B cell (primary cell): ENCODE measurements at regions of chr1 and their contacts with region 1.

Region 1: DNA sequence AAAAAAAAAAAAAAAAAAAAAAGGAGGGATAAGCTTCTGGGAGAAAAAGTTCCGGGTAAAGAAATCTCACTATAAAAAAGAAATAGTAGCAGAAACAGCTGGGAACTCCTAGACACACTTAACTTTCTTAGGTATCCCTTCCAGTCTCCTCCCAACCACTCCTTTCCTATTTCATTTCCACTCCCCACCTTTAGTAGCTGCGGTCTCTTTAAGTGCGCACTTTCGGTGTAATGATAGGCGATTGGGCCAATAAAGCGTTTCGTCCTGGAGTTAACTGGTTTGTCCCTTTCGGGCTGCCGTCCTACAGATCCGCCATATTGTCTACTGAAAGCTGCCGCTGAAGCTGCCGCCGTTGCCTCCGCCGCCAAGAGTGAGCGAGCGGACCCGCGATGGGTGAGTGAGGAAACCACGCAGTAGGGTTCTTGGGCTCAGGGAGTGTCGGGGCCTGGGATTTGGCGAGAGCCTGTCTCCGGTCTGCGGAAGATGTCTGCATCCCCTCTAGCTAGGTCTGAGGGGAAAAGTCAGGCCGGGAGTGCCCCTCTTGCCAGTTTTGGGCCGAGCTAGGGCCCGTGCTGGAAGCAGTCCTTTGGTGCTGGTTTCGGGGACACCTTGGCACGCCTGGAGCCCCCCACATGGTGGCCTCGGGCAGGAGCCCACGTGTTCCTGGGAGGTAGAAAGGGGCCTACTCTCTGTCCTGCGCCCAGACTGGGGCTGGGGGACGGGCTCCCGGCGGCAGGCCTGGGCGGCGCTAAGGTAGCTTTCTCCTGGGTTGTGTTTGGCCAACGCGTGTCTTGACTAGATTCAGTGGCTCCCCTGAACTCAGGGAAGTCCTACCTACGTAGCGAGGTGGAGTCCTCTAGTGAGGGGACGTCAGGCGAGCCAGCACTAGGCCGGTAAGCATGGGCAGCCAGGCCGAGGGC is at the start of gene KPNA6:
- DNase-seq: peak; percentile 96
- ATAC-seq: peak; percentile 83
- H3K4me3 ChIP-seq: peak within 1 kb of the TSS; percentile 86 to 99 (median 93)
- H3K4me3 Mint-ChIP-seq: peak within 1 kb of the TSS; percentile 100
- H3K27ac ChIP-seq: peak within 1 kb of the TSS; percentile 86 to 88
- H3K27ac Mint-ChIP-seq: peak within 1 kb of the TSS; percentile 100
- H3K4me1 ChIP-seq: peaks cover 33 to 44% of the 10 kb centered on the region in 2 donors
- H3K4me1 Mint-ChIP-seq: peaks cover 44% of the 10 kb centered on the region
- H3K27me3 ChIP-seq: no peaks in the 10 kb centered on the region
- H3K27me3 Mint-ChIP-seq: no peaks in the 10 kb centered on the region
- CTCF ChIP-seq: no peak
- total RNA-seq, gene KPNA6: 49.9 and 54.8 TPM in 2 replicates

Region 2: DNA sequence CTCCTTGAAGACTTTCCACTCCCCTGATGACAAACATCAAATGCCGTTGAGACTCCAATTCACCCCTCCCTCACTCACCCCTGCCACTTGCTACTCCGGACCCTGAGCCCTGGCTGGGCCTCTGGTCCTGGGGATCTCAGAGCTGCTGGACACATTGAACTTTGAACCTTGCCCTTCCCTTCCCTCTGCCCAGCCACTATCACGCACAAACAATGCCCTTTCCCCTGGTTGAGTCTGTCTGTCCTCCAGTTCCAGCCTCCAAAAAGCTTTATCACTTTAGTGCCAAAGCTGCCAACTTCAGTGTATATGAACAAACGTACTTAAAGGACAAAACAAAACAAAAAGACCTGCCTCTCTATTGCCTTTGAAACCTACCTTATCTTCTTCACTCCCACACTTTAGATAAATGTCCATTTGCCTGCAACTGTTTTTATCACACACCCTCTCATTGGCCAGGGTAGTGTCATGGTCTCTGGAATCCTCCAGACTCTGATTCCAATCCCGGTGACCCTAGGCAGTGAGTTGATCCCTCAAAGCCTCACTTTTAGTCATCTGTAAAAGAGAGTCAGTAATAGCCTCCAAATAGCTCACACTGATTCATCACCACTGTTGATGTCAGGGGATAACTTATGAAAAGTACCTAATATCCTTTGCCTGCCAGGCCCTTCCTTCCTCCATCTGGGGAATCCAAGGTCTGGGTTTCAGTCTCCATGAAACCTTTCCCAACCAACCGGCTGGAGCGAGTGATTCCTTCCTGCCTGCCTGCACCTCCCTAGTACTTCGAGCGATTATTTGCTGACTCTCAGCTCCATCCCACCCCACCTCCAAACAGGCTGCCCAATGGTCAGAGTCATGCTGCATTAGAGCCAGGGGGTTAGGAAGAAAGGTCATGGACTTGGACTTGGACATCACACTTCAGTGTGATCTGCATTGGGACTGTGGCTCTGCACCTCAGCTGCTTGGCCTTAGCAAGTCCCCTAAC is 276.3 kb before region 1 on chr1:
- CTCF ChIA-PET with region 1: no interaction called
- POLR2A ChIA-PET with region 1: interaction called, 10 read pairs
- intact Hi-C with region 1: no loop called
- DNase-seq: no peak
- ATAC-seq: no peak
- H3K4me3 ChIP-seq: no peak overlapping the region
- H3K4me3 Mint-ChIP-seq: no peak overlapping the region
- H3K27ac ChIP-seq: no peak overlapping the region
- H3K27ac Mint-ChIP-seq: no peak overlapping the region
- H3K4me1 ChIP-seq: peaks cover 16 to 22% of the 10 kb centered on the region in 2 donors
- H3K4me1 Mint-ChIP-seq: peaks cover 16% of the 10 kb centered on the region
- H3K27me3 ChIP-seq: no peaks in the 10 kb centered on the region
- H3K27me3 Mint-ChIP-seq: no peaks in the 10 kb centered on the region
- CTCF ChIP-seq: no peak

Region 3: DNA sequence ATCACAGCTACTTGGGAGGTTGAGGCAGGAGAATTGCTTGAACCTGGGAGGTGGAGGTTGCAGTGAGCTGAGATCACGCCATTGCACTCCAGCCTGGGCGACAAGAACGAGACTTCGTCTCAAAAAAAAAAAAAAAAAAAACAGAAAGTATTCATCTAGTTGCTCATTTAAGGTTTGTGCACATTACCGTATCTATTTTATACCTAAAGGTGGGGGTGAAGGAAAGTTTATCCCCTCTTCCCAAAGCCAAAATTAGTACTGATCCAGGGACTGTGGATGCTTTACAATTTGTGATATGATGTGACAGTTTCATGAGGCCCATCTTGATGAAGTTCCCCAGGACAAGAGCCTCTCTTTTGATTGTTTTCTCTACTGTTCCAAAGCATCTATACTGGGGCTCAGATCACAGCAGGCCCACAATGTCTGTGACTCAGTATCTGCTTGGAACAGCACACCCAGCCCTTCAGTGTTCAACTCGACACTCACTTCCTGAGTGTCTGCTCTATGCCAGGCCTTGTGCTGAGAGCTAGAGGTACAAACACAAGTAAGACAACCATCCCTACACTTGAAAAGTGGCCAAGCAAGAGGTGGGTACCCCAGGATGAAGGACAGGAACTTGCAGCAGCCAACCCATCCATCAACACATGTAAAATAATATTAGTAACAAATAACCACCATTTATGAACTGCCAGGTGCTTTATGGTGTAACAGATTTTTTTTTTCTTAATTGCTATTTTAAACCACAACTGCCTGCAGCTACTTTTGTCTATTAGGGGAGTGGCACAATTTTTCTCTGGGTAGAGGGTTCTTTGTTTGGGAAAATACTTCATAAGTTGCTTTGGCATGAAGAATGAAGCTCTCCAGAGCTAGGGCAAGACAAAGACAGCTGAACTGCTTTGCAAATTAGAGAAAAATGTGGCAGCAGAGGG is 123.3 kb before region 1 on chr1:
- CTCF ChIA-PET with region 1: no interaction called
- POLR2A ChIA-PET with region 1: no interaction called
- intact Hi-C with region 1: no loop called
- DNase-seq: no peak
- ATAC-seq: no peak
- H3K4me3 ChIP-seq: peak overlapping the region in 1 of 5 experiments; percentile 9
- H3K4me3 Mint-ChIP-seq: peak overlapping the region; percentile 67
- H3K27ac ChIP-seq: peak overlapping the region; percentile 58 to 88
- H3K27ac Mint-ChIP-seq: peak overlapping the region; percentile 89
- H3K4me1 ChIP-seq: peaks cover 45 to 47% of the 10 kb centered on the region in 2 donors
- H3K4me1 Mint-ChIP-seq: peaks cover 46% of the 10 kb centered on the region
- H3K27me3 ChIP-seq: no peaks in the 10 kb centered on the region
- H3K27me3 Mint-ChIP-seq: no peaks in the 10 kb centered on the region
- CTCF ChIP-seq: no peak

Region 4: GRCh38 chr1:32127409-32128198 is 19.6 kb after region 1 on chr1:
- CTCF ChIA-PET with region 1: interaction called, 9 read pairs
- POLR2A ChIA-PET with region 1: interaction called, 11 read pairs
- intact Hi-C with region 1: no loop called
- DNase-seq: no peak
- ATAC-seq: no peak
- H3K4me3 ChIP-seq: no peak overlapping the region
- H3K4me3 Mint-ChIP-seq: peak overlapping the region; percentile 7
- H3K27ac ChIP-seq: peak overlapping the region in 1 of 2 donors; percentile 17
- H3K27ac Mint-ChIP-seq: peak overlapping the region; percentile 29
- H3K4me1 ChIP-seq: peaks cover 18 to 31% of the 10 kb centered on the region in 2 donors
- H3K4me1 Mint-ChIP-seq: peaks cover 43% of the 10 kb centered on the region
- H3K27me3 ChIP-seq: no peaks in the 10 kb centered on the region
- H3K27me3 Mint-ChIP-seq: no peaks in the 10 kb centered on the region
- CTCF ChIP-seq: no peak

Region 5: GRCh38 chr1:32247983-32248889 is 140.2 kb after region 1 on chr1:
- CTCF ChIA-PET with region 1: interaction called, 16 read pairs
- POLR2A ChIA-PET with region 1: no interaction called
- intact Hi-C with region 1: loop called (anchors 5 kb)
- DNase-seq: peak; percentile 77
- ATAC-seq: peak; percentile 11
- H3K4me3 ChIP-seq: peak overlapping the region in 3 of 5 experiments; percentile 7 to 56 (median 29)
- H3K4me3 Mint-ChIP-seq: peak overlapping the region; percentile 68
- H3K27ac ChIP-seq: peak overlapping the region; percentile 94 to 95
- H3K27ac Mint-ChIP-seq: peak overlapping the region; percentile 84
- H3K4me1 ChIP-seq: peaks cover 72 to 73% of the 10 kb centered on the region in 2 donors
- H3K4me1 Mint-ChIP-seq: peaks cover 64% of the 10 kb centered on the region
- H3K27me3 ChIP-seq: no peaks in the 10 kb centered on the region
- H3K27me3 Mint-ChIP-seq: no peaks in the 10 kb centered on the region
- CTCF ChIP-seq: peak; percentile 90

Region 6: GRCh38 chr1:32474954-32475353 is 367.0 kb after region 1 on chr1:
- CTCF ChIA-PET with region 1: no interaction called
- POLR2A ChIA-PET with region 1: interaction called, 10 read pairs
- intact Hi-C with region 1: no loop called
- DNase-seq: no peak
- ATAC-seq: no peak
- H3K4me3 ChIP-seq: no peak overlapping the region
- H3K4me3 Mint-ChIP-seq: no peak overlapping the region
- H3K27ac ChIP-seq: no peak overlapping the region
- H3K27ac Mint-ChIP-seq: no peak overlapping the region
- H3K4me1 ChIP-seq: no peaks in the 10 kb centered on the region
- H3K4me1 Mint-ChIP-seq: no peaks in the 10 kb centered on the region
- H3K27me3 ChIP-seq: peaks cover 0 to 20% (median 5%) of the 10 kb centered on the region in 4 experiments
- H3K27me3 Mint-ChIP-seq: peaks cover 34% of the 10 kb centered on the region
- CTCF ChIP-seq: no peak